ENCODE measurements at regions of chr17 and their contacts with region 1.

Region 1: DNA sequence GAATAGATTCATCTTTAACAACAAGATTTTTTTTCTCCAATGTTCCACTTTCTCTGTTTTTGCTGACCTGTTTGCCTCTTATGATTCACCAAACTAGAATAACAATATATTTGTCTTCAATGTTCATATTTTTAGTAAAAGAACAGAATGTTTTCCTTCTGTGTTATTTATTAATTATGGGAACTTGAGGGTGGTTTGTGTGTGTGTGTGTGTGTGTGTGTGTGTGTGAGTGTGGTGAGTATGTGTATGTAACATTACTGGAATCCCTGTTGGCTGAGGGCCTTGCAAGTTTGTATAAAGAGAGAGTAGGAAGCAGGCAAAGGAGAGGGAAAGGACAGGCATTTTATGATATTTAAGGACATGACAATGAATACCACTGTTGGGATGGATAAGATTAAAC is 13.8 kb downstream of the STXBP4 start:
- DNase-seq: no peak
- ATAC-seq: no peak
- H3K4me3 ChIP-seq: no peak overlapping the region
- H3K27ac ChIP-seq: no peak overlapping the region
- H3K4me1 ChIP-seq: no peaks in the 10 kb centered on the region
- H3K27me3 ChIP-seq: no peaks in the 10 kb centered on the region
- CTCF ChIP-seq: no peak

Region 2: DNA sequence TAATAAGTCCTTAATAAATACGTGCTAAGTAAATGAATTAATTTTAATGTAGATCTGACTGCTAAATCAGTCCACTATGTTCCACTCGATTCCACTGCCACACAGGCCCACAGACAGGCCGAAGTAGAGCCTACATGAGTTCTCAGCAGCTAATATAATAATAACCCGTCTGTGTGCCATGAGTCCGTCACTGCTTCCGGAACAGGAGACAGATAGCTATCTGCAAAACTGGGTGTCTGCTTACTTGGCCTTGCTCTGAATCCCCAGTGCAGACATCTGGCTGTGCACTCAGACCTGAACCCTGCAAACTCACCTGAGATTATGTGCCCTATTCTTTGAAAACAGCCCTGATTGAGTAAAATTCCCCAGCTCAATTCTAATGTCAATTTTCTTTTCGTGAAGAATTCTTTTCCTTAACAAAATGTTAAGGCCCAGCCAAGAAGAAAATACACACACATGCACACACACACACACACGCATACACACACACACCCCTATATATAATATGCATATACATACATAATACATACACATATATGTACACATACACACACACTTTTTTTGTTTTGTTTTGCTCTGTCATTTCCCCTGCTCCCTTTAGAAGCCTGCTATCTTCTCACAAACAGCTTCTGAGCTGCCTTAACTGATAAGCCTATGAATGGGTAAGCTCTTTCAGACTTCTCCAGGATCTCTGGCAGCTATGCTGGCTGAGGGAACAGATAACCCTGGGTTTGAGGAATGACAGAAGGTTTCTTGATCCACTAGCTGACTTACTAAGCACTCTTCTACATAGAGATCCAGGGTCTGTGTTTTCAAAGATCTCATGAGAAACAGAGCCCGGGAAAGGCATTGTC is 121.6 kb before region 1 on chr17:
- CTCF ChIA-PET with region 1: no interaction called
- POLR2A ChIA-PET with region 1: no interaction called
- in situ Hi-C with region 1: no loop called
- intact Hi-C with region 1: no loop called
- DNase-seq: no peak
- ATAC-seq: no peak
- H3K4me3 ChIP-seq: no peak overlapping the region
- H3K27ac ChIP-seq: no peak overlapping the region
- H3K4me1 ChIP-seq: no peaks in the 10 kb centered on the region
- H3K27me3 ChIP-seq: no peaks in the 10 kb centered on the region
- CTCF ChIP-seq: no peak

Region 3: GRCh38 chr17:55783684-55784245 is 801.4 kb after region 1 on chr17:
- CTCF ChIA-PET with region 1: no interaction called
- POLR2A ChIA-PET with region 1: interaction called, 12 read pairs
- in situ Hi-C with region 1: no loop called
- intact Hi-C with region 1: no loop called
- DNase-seq: no peak
- ATAC-seq: no peak
- H3K4me3 ChIP-seq: no peak overlapping the region
- H3K27ac ChIP-seq: no peak overlapping the region
- H3K4me1 ChIP-seq: no peaks in the 10 kb centered on the region
- H3K27me3 ChIP-seq: no peaks in the 10 kb centered on the region
- CTCF ChIP-seq: no peak

Measured in Panc1 (cell line).